AG04450 (cell line): ENCODE measurements at regions of chr11 and their contacts with region 1.

Region 1: GRCh38 chr11:57345555-57346211 is 7.5 kb downstream of the P2RX3 start:
- DNase-seq: no peak
- H3K4me3 ChIP-seq: no peak overlapping the region
- H3K27ac ChIP-seq: no peak overlapping the region
- H3K27me3 ChIP-seq: peaks cover 7% of the 10 kb centered on the region
- CTCF ChIP-seq: peak; percentile 65

Region 2: GRCh38 chr11:57358543-57358961 is 12.9 kb after region 1 on chr11:
- CTCF ChIA-PET with region 1: interaction called, 12 read pairs
- POLR2A ChIA-PET with region 1: interaction called, 5 read pairs
- DNase-seq: no peak
- H3K4me3 ChIP-seq: no peak overlapping the region
- H3K27ac ChIP-seq: no peak overlapping the region
- H3K27me3 ChIP-seq: peaks cover 37% of the 10 kb centered on the region
- CTCF ChIP-seq: no peak

Region 3: GRCh38 chr11:57480409-57481137 is 134.9 kb after region 1 on chr11:
- CTCF ChIA-PET with region 1: interaction called, 11 read pairs
- POLR2A ChIA-PET with region 1: no interaction called
- DNase-seq: no peak
- H3K4me3 ChIP-seq: no peak overlapping the region
- H3K27ac ChIP-seq: no peak overlapping the region
- H3K27me3 ChIP-seq: peaks cover 38% of the 10 kb centered on the region
- CTCF ChIP-seq: peak; percentile 75